ENCODE measurements at regions of chr16 and their contacts with region 1.

Region 1: GRCh38 chr16:68528686-68529379 is 10.3 kb upstream of the ZFP90 start:
- DNase-seq: peak; percentile 74 to 94
- H3K4me3 ChIP-seq: peak overlapping the region in 1 of 4 experiments; percentile 8; a peak in 1 of 8 replicates
- H3K27ac ChIP-seq: no peak overlapping the region
- H3K4me1 ChIP-seq: peaks cover 0 to 3% (median 3%) of the 10 kb centered on the region in 4 experiments; a peak in 4 of 7 replicates
- H3K27me3 ChIP-seq: peaks cover 4 to 21% (median 15%) of the 10 kb centered on the region in 4 experiments
- CTCF ChIP-seq: peak; percentile 94 to 99 (median 98)
- EP300 ChIP-seq: no peak
- POLR2A ChIP-seq: no peak
- RAD21 ChIP-seq: peak; percentile 97

Region 2: DNA sequence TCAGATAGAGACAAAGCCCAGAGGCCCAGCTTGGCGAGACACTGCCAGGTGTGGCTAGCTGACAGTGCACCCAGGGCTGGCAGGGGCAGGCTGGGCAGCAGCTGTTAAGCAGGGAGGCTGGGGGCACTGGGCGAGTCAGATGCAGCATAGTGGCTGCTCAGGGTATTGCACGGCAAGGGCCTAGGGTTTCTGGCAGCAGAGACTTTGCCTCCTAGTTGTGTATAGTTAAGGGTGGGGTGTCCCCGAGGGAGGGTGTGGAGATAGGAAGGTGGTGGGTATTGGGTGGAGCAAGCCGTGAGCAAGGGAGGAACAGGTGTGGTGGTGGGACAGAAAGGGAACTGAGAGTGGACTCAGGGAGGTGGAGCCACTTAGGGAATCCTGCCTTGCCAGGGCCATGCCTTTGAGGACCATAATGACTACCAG is 146.5 kb before region 1 on chr16:
- CTCF ChIA-PET with region 1: no interaction called
- POLR2A ChIA-PET with region 1: no interaction called
- DNase-seq: peak in 1 of 2 experiments; percentile 78
- H3K4me3 ChIP-seq: no peak overlapping the region
- H3K27ac ChIP-seq: no peak overlapping the region
- H3K4me1 ChIP-seq: peaks cover 3 to 23% (median 15%) of the 10 kb centered on the region in 4 experiments
- H3K27me3 ChIP-seq: no peaks in the 10 kb centered on the region; a peak in 1 of 7 replicates
- CTCF ChIP-seq: peak; percentile 57 to 88 (median 71)
- EP300 ChIP-seq: no peak
- POLR2A ChIP-seq: no peak
- RAD21 ChIP-seq: peak in 1 of 2 experiments; percentile 49; a peak in 2 of 4 replicates

Region 3: GRCh38 chr16:68538880-68539701 is 10.3 kb after region 1 on chr16 and contains the start of gene ZFP90:
- CTCF ChIA-PET with region 1: interaction called, 10 read pairs
- POLR2A ChIA-PET with region 1: interaction called, 11 read pairs
- DNase-seq: peak; percentile 59 to 94
- H3K4me3 ChIP-seq: peak within 1 kb of the TSS; percentile 80 to 89 (median 82)
- H3K27ac ChIP-seq: peak within 1 kb of the TSS; percentile 42; the same call in 1 of the 2 replicates
- H3K4me1 ChIP-seq: no peaks in the 10 kb centered on the region; a peak in 1 of 7 replicates
- H3K27me3 ChIP-seq: no peaks in the 10 kb centered on the region
- CTCF ChIP-seq: peak in 1 of 3 experiments; percentile 9; a peak in 1 of 4 replicates
- EP300 ChIP-seq: no peak
- POLR2A ChIP-seq: peak in 1 of 2 experiments; percentile 60; a peak in 2 of 3 replicates
- RAD21 ChIP-seq: no peak
- total RNA-seq, gene ZFP90: 15.9 and 19.1 TPM in 2 replicates

Region 4: GRCh38 chr16:68564367-68564985 is 35.6 kb after region 1 on chr16:
- CTCF ChIA-PET with region 1: interaction called, 11 read pairs
- POLR2A ChIA-PET with region 1: interaction called, 3 read pairs
- DNase-seq: no peak
- H3K4me3 ChIP-seq: peak overlapping the region in 1 of 4 experiments; percentile 18; a peak in 1 of 8 replicates
- H3K27ac ChIP-seq: no peak overlapping the region
- H3K4me1 ChIP-seq: no peaks in the 10 kb centered on the region
- H3K27me3 ChIP-seq: no peaks in the 10 kb centered on the region
- CTCF ChIP-seq: no peak
- EP300 ChIP-seq: no peak
- POLR2A ChIP-seq: no peak
- RAD21 ChIP-seq: no peak

Region 5: GRCh38 chr16:68689925-68690324 is 161.1 kb after region 1 on chr16:
- CTCF ChIA-PET with region 1: interaction called, 16 read pairs
- POLR2A ChIA-PET with region 1: no interaction called
- DNase-seq: no peak
- H3K4me3 ChIP-seq: no peak overlapping the region
- H3K27ac ChIP-seq: no peak overlapping the region
- H3K4me1 ChIP-seq: no peaks in the 10 kb centered on the region
- H3K27me3 ChIP-seq: no peaks in the 10 kb centered on the region; a peak in 1 of 7 replicates
- CTCF ChIP-seq: no peak; a peak in 1 of 4 replicates
- EP300 ChIP-seq: no peak
- POLR2A ChIP-seq: no peak
- RAD21 ChIP-seq: peak; percentile 26 to 37; a peak in 3 of 4 replicates